ENCODE measurements at regions of chr12 and their contacts with region 1.

Region 1: GRCh38 chr12:31536672-31537071 is 54.3 kb downstream of the DENND5B start:
- DNase-seq: no peak

Region 2: GRCh38 chr12:32379667-32380066 is 843.0 kb after region 1 on chr12:
- intact Hi-C with region 1: no loop called
- DNase-seq: no peak

Region 3: GRCh38 chr12:33116284-33116683 is 1579.6 kb after region 1 on chr12:
- intact Hi-C with region 1: loop called in 1 of 2 experiments (anchors 10 kb)
- DNase-seq: no peak